Left ventricle myocardium superior (tissue), 1 donor: ENCODE measurements at regions of chr12 and their contacts with region 1.

Region 1: GRCh38 chr12:15220994-15221885 is at the start of gene RERG:
- DNase-seq: peak; percentile 91
- ATAC-seq: peak; percentile 100
- total RNA-seq, gene RERG: 3.8 TPM

Region 2: GRCh38 chr12:15151161-15152120 is 69.8 kb before region 1 on chr12:
- intact Hi-C with region 1: loop called (anchors 5 kb)
- DNase-seq: no peak
- ATAC-seq: peak; percentile 84

Region 3: DNA sequence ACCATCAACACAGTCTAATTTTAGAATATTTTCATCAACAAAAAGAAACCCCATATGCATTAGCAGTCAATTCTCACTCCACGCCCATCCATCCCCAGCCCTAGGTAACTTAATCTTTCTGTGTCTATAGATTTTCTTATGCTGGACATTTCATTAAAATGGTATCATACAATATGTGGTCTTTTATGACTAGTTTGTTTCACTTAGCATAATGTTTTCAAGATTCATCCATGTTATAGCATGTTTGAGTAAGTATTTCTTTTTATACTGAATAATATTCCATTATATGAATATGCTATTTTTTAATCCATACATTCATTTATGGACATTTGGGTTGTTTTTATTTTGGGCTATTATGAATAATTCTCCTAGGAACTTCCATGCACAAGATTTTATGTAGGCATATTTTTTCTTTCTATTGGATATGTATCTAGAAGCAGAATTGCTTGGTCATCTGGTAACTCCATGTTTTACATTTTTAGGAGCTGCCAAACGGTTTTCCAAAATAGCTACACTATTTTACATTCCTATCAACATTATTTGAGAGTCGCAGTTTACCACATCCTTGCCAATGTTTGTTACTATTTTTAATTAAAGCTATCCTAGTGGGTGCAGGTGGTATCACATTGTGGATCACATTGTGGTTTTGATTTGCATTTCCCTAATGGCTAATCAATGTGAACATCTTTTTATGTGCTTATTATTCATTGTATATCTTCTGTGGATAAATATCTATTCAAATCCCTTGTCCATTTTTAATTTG is 49.0 kb before region 1 on chr12:
- intact Hi-C with region 1: no loop called
- DNase-seq: no peak
- ATAC-seq: no peak

Region 4: DNA sequence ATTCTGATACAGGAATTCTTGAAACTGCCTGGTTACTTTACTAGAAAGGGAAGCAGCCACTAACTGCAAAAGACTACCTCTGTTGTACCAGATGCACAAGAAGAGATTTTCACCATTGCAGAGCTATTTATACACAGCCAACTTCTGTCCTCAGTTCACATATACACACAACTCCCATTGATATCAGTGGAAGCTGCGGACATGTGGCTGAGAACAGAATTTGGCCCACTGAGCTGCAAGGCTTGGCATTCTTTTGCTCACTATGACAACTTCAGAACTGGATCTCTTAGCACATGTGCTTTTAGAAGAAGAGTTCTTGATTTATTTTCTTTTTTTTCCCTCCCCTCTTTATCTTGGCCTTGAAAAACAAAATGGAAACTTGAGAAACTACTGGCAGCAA is 129.4 kb after region 1 on chr12:
- intact Hi-C with region 1: no loop called
- DNase-seq: no peak
- ATAC-seq: no peak